Spleen (tissue), 13 donors: ENCODE measurements at regions of chr14 and their contacts with region 1.

Region 1: GRCh38 chr14:22778084-22778483 is 11.6 kb downstream of the OXA1L start:
- DNase-seq: no peak
- H3K4me3 ChIP-seq: no peak overlapping the region
- H3K27ac ChIP-seq: peak overlapping the region in 7 of 8 donors; percentile 10 to 81 (median 62)
- H3K4me1 ChIP-seq: peaks cover 0 to 77% (median 30%) of the 10 kb centered on the region in 6 donors
- H3K27me3 ChIP-seq: no peaks in the 10 kb centered on the region
- CTCF ChIP-seq: no peak
- POLR2A ChIP-seq: no peak

Region 2: GRCh38 chr14:22822571-22823098 is 44.6 kb after region 1 on chr14:
- intact Hi-C with region 1: loop called (anchors 5 kb)
- DNase-seq: peak; percentile 93
- H3K4me3 ChIP-seq: peak overlapping the region; percentile 32 to 71 (median 44)
- H3K27ac ChIP-seq: peak overlapping the region; percentile 65 to 89 (median 81)
- H3K4me1 ChIP-seq: peaks cover 25 to 75% (median 60%) of the 10 kb centered on the region in 6 donors
- H3K27me3 ChIP-seq: peaks cover 0 to 8% (median 0%) of the 10 kb centered on the region in 7 donors
- CTCF ChIP-seq: peak; percentile 70 to 94 (median 85)
- POLR2A ChIP-seq: no peak